ENCODE measurements at regions of chr2 and their contacts with region 1.

Region 1: GRCh38 chr2:152635635-152636298 is 81.5 kb downstream of the PRPF40A start:
- DNase-seq: peak in 1 of 2 donors; percentile 30
- ATAC-seq: peak in 1 of 2 donors; percentile 53
- H3K4me3 ChIP-seq: no peak overlapping the region
- H3K27ac ChIP-seq: no peak overlapping the region
- H3K4me1 ChIP-seq: no peaks in the 10 kb centered on the region
- H3K27me3 ChIP-seq: no peaks in the 10 kb centered on the region
- CTCF ChIP-seq: peak; percentile 77 to 89 (median 87)
- POLR2A ChIP-seq: no peak

Region 2: DNA sequence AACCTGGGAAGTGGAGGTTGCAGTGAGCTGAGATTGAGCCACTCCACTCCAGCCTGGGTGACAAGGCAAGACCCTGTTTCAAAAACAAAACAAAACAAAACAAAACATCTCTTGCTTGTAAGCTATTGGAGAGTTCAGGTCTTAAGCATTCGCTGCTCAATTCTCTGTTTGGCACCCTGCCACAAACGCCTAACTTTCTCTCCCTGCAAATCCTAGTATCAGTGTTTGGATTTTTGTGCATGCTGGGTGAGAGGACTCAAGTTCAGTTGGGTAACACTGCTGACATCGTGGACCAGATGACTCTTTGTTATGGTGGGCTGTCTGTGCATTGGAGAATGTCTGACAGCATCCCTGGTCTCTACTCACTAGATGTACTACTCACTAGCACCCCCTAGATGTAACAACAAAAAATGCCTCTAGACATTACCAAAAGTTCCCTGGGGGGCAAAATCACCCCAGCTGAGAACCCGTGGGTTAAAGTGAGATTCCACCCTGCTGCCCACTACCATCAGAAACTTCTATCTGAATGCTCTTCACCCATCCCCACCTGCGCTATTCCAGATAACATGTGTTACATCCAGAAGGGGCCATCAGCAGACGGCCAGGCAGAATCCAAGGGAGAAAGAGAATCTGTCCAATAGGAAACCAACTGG is 587.8 kb before region 1 on chr2:
- in situ Hi-C with region 1: loop called in 3 of 4 experiments (anchors 10 to 25 kb)
- intact Hi-C with region 1: no loop called
- DNase-seq: no peak
- ATAC-seq: no peak
- H3K4me3 ChIP-seq: no peak overlapping the region
- H3K27ac ChIP-seq: no peak overlapping the region
- H3K4me1 ChIP-seq: no peaks in the 10 kb centered on the region
- H3K27me3 ChIP-seq: no peaks in the 10 kb centered on the region
- CTCF ChIP-seq: peak in 1 of 5 experiments; percentile 28
- POLR2A ChIP-seq: no peak

Region 3: DNA sequence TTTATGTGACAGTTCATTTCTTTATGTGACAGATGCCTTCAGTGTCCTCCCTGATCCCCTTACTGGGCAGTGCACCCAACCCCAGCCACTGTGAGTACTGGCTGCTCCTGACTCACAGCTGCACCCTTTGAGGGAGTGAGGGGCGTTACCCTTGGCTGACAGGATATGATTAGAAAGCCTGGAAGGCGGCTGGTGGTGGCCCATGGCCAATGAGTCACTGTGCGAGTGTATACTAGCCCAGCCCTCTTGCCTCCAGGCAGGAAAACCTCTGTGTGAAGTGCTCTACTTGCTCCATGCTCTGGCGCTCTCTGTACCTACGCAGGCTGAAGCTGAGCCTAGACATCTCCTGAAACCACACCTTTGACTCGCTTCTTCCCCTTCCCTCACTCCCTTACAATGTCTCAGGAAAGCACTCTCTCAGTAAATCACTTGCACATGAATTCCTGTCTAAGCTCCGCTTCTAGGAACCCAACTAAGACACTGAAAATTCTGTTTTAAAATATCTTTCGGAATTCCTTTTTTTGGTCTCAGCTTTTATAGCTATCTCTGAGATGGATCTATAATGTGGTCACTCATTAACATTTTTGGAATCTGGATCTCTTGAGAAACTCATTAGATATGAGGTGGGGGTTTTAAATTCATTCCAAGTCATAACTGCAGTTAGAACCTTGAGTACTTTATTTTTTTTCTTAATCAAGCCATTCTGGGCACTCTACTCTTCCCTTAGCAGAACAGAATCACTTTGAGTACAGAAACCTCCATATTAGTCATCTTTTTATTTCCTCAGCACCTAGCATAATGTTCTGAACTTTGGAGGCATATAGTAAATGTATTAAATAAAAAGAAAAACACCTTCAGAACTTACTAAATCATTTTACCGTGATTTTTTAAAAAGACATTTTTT is 435.0 kb before region 1 on chr2:
- in situ Hi-C with region 1: no loop called
- intact Hi-C with region 1: no loop called
- DNase-seq: peak; percentile 76 to 84
- ATAC-seq: peak; percentile 95 to 100
- H3K4me3 ChIP-seq: no peak overlapping the region
- H3K27ac ChIP-seq: no peak overlapping the region
- H3K4me1 ChIP-seq: peaks cover 0 to 3% of the 10 kb centered on the region in 2 donors
- H3K27me3 ChIP-seq: no peaks in the 10 kb centered on the region
- CTCF ChIP-seq: no peak
- POLR2A ChIP-seq: peak in 1 of 2 donors; percentile 32

Region 4: GRCh38 chr2:152861349-152861942 is 225.7 kb after region 1 on chr2:
- in situ Hi-C with region 1: no loop called
- intact Hi-C with region 1: no loop called
- DNase-seq: no peak
- ATAC-seq: no peak
- H3K4me3 ChIP-seq: no peak overlapping the region
- H3K27ac ChIP-seq: no peak overlapping the region
- H3K4me1 ChIP-seq: no peaks in the 10 kb centered on the region
- H3K27me3 ChIP-seq: no peaks in the 10 kb centered on the region
- CTCF ChIP-seq: peak in 3 of 5 experiments; percentile 31 to 54 (median 45)
- POLR2A ChIP-seq: no peak

Region 5: DNA sequence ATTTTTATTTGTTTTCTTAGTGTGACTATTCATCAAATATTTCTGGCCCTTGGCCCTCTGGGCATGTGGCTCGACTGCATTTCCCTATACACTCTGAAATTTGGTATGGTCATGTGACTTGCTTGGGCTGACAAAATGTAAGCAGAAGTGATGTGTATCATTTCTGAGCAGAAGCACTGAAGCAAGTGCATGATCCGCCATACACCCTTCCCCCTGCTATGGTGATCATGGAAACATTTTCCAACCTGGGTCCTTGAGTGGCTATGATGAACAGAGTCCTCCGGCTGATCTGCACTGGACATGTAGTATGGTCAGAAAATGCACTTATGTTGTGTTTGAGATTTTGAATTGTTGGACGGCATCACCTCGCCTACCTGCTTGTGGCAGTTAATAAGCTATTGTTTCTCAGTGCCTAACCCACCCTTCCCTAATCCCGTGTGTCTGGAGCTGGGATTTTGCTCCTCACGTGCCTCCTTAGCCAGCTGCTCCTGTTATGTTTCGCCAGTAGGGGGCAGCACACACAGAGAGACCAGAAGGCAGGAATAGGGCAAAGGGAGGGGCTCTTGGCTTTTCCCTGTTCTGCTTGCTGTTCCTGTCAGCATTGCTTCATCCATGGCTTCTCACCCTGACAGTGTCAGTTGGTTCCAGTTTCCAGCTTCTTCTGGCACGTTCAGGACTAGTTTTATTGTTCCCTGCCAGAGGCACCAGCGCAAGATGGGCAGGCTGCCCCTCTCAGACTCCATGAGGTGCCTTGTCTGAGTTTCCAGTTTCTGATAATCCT is 290.0 kb after region 1 on chr2:
- in situ Hi-C with region 1: no loop called
- intact Hi-C with region 1: no loop called
- DNase-seq: no peak
- ATAC-seq: no peak
- H3K4me3 ChIP-seq: no peak overlapping the region
- H3K27ac ChIP-seq: no peak overlapping the region
- H3K4me1 ChIP-seq: no peaks in the 10 kb centered on the region
- H3K27me3 ChIP-seq: no peaks in the 10 kb centered on the region
- CTCF ChIP-seq: peak in 1 of 5 experiments; percentile 36
- POLR2A ChIP-seq: no peak